Activated CD8-positive, alpha-beta T cell treated with anti-CD3 and anti-CD28 coated beads for 36 hours (primary cell): ENCODE measurements at regions of chr5 and their contacts with region 1.

Region 1: GRCh38 chr5:91101600-91102379 is 281.3 kb downstream of the ARRDC3 start:
- DNase-seq: peak; percentile 70
- ATAC-seq: peak; percentile 99
- H3K4me3 Mint-ChIP-seq: no peak overlapping the region
- H3K27ac Mint-ChIP-seq: no peak overlapping the region
- H3K4me1 Mint-ChIP-seq: no peaks in the 10 kb centered on the region
- H3K27me3 Mint-ChIP-seq: no peaks in the 10 kb centered on the region
- CTCF ChIP-seq: peak; percentile 63

Region 2: GRCh38 chr5:91219803-91220371 is 118.1 kb after region 1 on chr5:
- CTCF ChIA-PET with region 1: interaction called, 3 read pairs
- POLR2A ChIA-PET with region 1: no interaction called
- intact Hi-C with region 1: loop called (anchors 5 kb)
- DNase-seq: peak; percentile 62
- ATAC-seq: peak; percentile 47
- H3K4me3 Mint-ChIP-seq: no peak overlapping the region
- H3K27ac Mint-ChIP-seq: no peak overlapping the region
- H3K4me1 Mint-ChIP-seq: no peaks in the 10 kb centered on the region
- H3K27me3 Mint-ChIP-seq: no peaks in the 10 kb centered on the region
- CTCF ChIP-seq: peak; percentile 58

Region 3: DNA sequence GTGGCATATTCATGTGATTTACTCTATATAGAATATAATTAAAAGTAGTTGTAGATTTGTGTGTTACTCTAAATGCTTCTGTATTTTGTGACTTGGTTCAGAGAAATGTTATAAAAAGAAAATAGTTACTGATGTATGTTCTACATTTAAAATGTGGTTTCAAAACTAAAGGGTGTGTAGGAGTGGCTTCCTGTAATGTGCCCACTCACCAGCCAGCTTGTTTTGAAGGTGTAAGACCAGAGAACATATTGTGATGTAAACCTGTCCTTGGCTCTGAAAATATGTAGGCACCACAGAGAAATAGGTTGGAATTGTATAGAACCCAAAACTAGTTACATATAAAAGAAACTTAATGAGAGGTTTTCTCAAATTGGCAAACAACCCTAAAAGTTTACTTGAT is 332.6 kb after region 1 on chr5:
- CTCF ChIA-PET with region 1: no interaction called
- POLR2A ChIA-PET with region 1: no interaction called
- intact Hi-C with region 1: no loop called
- DNase-seq: peak; percentile 39
- ATAC-seq: peak; percentile 67
- H3K4me3 Mint-ChIP-seq: no peak overlapping the region
- H3K27ac Mint-ChIP-seq: peak overlapping the region; percentile 82
- H3K4me1 Mint-ChIP-seq: peaks cover 31% of the 10 kb centered on the region
- H3K27me3 Mint-ChIP-seq: no peaks in the 10 kb centered on the region
- CTCF ChIP-seq: no peak